H1 (cell line): ENCODE measurements at regions of chr5 and their contacts with region 1.

Region 1: GRCh38 chr5:6632917-6633468 is at the starts of genes NSUN2 and SRD5A1:
- DNase-seq: peak; percentile 76 to 95
- H3K4me3 ChIP-seq: peak within 1 kb of the TSS; percentile 91 to 99 (median 92)
- H3K27ac ChIP-seq: peak within 1 kb of the TSS; percentile 97
- H3K4me1 ChIP-seq: peaks cover 0 to 4% (median 1%) of the 10 kb centered on the region in 4 experiments; a peak in 4 of 7 replicates
- H3K27me3 ChIP-seq: no peaks in the 10 kb centered on the region
- CTCF ChIP-seq: no peak
- EP300 ChIP-seq: no peak
- POLR2A ChIP-seq: peak; percentile 50 to 63; a peak in 2 of 3 replicates
- RAD21 ChIP-seq: no peak
- total RNA-seq, gene NSUN2: 94.7 and 96.5 TPM in 2 replicates
- total RNA-seq, gene SRD5A1: 36.7 and 42.4 TPM in 2 replicates

Region 2: DNA sequence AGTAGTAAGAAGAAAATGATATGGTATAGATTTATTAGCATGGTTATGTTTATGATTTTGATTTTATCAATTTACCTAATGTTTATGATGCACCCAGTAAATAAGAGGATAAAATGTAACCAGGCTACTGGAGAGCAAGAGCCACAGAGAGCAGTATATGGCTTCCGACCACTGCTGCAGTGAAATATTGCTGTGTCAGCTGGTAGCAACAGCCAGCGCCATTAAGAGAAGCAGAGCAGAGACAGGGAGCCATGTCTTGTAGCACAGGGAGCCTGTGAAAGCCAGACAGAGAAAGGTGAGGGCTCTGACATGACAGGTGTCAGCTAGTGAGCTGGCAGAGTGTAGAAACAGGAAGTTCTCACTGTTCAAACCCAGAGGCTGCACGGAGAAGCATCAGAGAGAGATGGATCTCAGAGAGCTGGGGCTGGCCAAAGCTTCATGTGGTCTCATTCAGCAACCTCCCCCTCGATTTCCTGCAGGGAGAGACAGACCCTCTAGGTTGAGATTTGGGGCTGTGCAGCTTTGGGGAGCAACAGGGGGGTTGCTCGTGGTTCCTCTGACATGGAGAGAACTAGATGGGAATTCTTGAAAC is 456.8 kb before region 1 on chr5:
- CTCF ChIA-PET with region 1: no interaction called
- POLR2A ChIA-PET with region 1: no interaction called
- DNase-seq: no peak
- H3K4me3 ChIP-seq: no peak overlapping the region
- H3K27ac ChIP-seq: no peak overlapping the region
- H3K4me1 ChIP-seq: peaks cover 0 to 1% (median 0%) of the 10 kb centered on the region in 4 experiments; a peak in 1 of 7 replicates
- H3K27me3 ChIP-seq: no peaks in the 10 kb centered on the region
- CTCF ChIP-seq: no peak
- EP300 ChIP-seq: no peak
- POLR2A ChIP-seq: no peak
- RAD21 ChIP-seq: no peak

Region 3: DNA sequence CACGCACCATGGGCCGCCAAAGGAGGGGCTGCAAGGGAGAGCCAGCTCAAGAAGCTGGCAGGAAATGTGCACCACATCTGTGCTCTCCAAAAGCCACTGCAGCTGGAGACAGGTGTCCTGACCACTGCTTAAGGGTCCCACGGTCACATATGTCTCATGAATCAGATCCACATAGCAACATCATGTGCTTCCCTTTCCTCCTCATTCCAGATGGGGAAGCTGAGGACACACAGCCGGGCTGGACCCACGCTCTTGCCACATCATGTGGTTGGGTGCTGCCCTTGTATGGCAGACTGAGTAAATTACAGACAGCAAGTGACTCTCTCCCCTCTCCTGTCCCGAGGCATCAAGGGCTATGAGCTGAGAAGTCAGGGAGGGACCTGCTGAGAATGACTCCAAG is 58.5 kb before region 1 on chr5:
- CTCF ChIA-PET with region 1: no interaction called
- POLR2A ChIA-PET with region 1: no interaction called
- DNase-seq: no peak
- H3K4me3 ChIP-seq: no peak overlapping the region
- H3K27ac ChIP-seq: no peak overlapping the region
- H3K4me1 ChIP-seq: no peaks in the 10 kb centered on the region; a peak in 1 of 7 replicates
- H3K27me3 ChIP-seq: no peaks in the 10 kb centered on the region
- CTCF ChIP-seq: peak in 1 of 3 experiments; percentile 8; a peak in 1 of 4 replicates
- EP300 ChIP-seq: no peak
- POLR2A ChIP-seq: no peak
- RAD21 ChIP-seq: peak; percentile 25 to 41; a peak in 3 of 4 replicates

Region 4: DNA sequence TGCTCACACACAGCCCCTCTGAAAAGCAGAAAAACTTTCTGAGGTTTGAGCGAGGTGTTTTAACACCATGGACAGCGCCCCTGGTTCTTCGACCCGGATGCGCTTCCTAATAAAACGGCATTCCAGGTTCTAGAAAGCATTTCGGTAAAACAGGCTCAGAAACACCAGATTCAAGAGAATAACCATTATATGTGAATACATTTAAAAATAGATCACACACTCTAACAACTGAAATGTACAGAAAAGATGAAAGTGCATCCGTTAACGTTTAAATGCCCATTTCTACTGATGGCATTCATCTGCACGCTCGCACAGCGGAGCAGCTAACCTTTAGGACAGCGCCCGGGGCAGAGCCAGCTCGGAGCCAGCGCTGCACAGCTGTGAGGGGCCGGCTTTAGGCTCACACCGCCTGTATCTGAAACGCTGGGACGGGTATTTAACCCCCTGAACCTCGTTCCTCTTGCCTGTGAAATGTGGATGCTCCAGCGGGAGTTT is 54.0 kb after region 1 on chr5:
- CTCF ChIA-PET with region 1: interaction called, 3 read pairs
- POLR2A ChIA-PET with region 1: interaction called, 10 read pairs
- DNase-seq: no peak
- H3K4me3 ChIP-seq: peak overlapping the region; percentile 48 to 63 (median 60); a peak in 7 of 8 replicates
- H3K27ac ChIP-seq: no peak overlapping the region
- H3K4me1 ChIP-seq: no peaks in the 10 kb centered on the region
- H3K27me3 ChIP-seq: peaks cover 0 to 4% (median 2%) of the 10 kb centered on the region in 4 experiments; a peak in 4 of 7 replicates
- CTCF ChIP-seq: no peak
- EP300 ChIP-seq: no peak
- POLR2A ChIP-seq: no peak
- RAD21 ChIP-seq: no peak

Region 5: DNA sequence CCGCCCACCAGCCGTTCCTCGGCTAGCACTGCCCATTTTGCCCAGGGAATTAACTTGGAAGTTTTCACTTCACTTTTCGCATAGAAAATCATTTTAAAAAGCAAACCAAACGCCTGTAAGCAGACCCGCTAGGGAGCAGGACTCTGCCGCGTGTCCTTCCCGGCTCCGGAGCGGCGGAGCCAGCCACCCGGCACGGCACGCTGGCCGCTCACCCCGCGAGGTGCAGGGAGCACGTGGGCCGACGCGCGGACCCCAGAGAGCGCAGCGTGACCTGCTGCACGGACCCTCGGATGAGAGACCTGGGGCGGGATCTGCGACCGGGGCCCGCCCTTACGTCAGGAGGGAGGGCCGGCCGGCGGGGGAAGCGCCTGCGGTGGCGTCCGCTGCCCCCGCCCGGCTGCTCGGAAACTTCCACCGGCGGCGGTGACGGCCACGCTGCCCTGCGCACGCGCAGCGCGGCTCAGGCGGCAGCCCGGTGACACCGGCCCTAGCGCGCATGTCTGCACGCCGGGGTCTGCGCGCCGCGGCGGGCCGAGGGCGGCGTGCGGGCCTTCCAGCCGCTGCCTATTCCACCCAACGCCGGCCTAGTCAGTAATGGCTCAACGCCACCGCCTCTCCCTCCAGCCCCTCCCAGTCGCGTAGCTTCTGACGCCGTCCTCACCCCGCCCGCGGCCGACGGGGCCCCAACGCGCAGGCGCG is 79.7 kb after region 1 on chr5:
- CTCF ChIA-PET with region 1: no interaction called
- POLR2A ChIA-PET with region 1: interaction called, 29 read pairs
- DNase-seq: peak; percentile 84 to 96
- H3K4me3 ChIP-seq: peak overlapping the region; percentile 67 to 73 (median 70)
- H3K27ac ChIP-seq: peak overlapping the region; percentile 62; the same call in 1 of the 2 replicates
- H3K4me1 ChIP-seq: peaks cover 0 to 12% (median 5%) of the 10 kb centered on the region in 4 experiments; a peak in 5 of 7 replicates
- H3K27me3 ChIP-seq: peaks cover 0 to 3% (median 0%) of the 10 kb centered on the region in 4 experiments; a peak in 3 of 7 replicates
- CTCF ChIP-seq: no peak
- EP300 ChIP-seq: peak; percentile 24 to 53; a peak in 1 of 3 replicates
- POLR2A ChIP-seq: peak in 1 of 2 experiments; percentile 64; a peak in 2 of 3 replicates
- RAD21 ChIP-seq: 0 out of 4 replicates have a peak, but pooled peaks of 1 of the 2 experiments have one; percentile 5

Region 6: DNA sequence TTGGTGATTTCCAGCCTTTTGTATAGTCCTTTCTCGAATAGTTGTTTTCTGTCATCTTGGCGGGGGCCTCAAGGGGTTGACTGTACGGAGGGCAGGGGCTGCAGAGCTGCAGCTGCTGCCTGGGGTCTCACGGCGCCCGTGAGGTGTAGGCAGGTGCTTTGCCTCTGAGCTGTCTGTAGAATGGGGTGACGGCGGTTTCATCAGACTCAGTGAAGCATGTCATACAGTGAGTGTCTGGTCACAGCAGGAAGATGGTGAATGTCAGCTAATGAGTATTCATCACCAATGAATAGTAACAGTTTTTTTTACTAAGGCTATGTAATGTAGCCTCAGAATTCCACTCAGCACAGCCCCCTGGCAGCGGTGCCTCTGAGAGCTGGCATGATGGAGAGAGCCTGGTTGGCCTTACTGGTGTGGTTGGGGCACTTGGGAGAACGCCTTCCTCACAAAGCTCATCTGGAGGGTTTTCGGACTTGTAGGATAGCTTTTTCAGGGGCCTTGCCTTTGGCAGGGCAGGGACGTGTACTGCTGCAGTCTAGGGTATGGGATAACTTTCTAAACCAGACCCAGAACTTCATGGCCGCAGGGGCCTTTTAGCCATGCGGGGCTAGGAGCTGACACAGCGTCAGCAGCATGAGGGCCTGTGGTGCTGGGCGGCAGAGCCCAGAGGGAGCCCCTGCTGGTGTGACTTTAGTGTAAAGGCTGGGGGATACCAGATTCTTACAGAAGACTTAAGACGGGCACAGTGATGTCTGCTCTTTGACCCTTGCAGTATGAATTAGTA is 95.2 kb after region 1 on chr5:
- CTCF ChIA-PET with region 1: interaction called, 4 read pairs
- POLR2A ChIA-PET with region 1: interaction called, 10 read pairs
- DNase-seq: no peak
- H3K4me3 ChIP-seq: no peak overlapping the region
- H3K27ac ChIP-seq: no peak overlapping the region
- H3K4me1 ChIP-seq: peaks cover 3 to 13% (median 6%) of the 10 kb centered on the region in 4 experiments; a peak in 6 of 7 replicates
- H3K27me3 ChIP-seq: no peaks in the 10 kb centered on the region
- CTCF ChIP-seq: no peak
- EP300 ChIP-seq: no peak
- POLR2A ChIP-seq: no peak
- RAD21 ChIP-seq: no peak; a peak in 1 of 4 replicates

Region 7: GRCh38 chr5:6745706-6746222 is 112.8 kb after region 1 on chr5:
- CTCF ChIA-PET with region 1: interaction called, 16 read pairs
- POLR2A ChIA-PET with region 1: interaction called, 4 read pairs
- DNase-seq: no peak
- H3K4me3 ChIP-seq: no peak overlapping the region
- H3K27ac ChIP-seq: no peak overlapping the region
- H3K4me1 ChIP-seq: peaks cover 0 to 3% (median 0%) of the 10 kb centered on the region in 4 experiments; a peak in 3 of 7 replicates
- H3K27me3 ChIP-seq: no peaks in the 10 kb centered on the region
- CTCF ChIP-seq: peak in 2 of 3 experiments; percentile 49 to 72; a peak in 3 of 4 replicates
- EP300 ChIP-seq: no peak
- POLR2A ChIP-seq: no peak
- RAD21 ChIP-seq: peak; percentile 76 to 83

Region 8: GRCh38 chr5:6820851-6821479 is 188.0 kb after region 1 on chr5:
- CTCF ChIA-PET with region 1: no interaction called
- POLR2A ChIA-PET with region 1: no interaction called
- DNase-seq: peak; percentile 59 to 86
- H3K4me3 ChIP-seq: no peak overlapping the region
- H3K27ac ChIP-seq: no peak overlapping the region
- H3K4me1 ChIP-seq: no peaks in the 10 kb centered on the region; a peak in 1 of 7 replicates
- H3K27me3 ChIP-seq: no peaks in the 10 kb centered on the region
- CTCF ChIP-seq: peak; percentile 74 to 99 (median 93)
- EP300 ChIP-seq: no peak
- POLR2A ChIP-seq: no peak
- RAD21 ChIP-seq: peak; percentile 97 to 99